HepG2 (cell line): ENCODE measurements at regions of chr1 and their contacts with region 1.

Region 1: DNA sequence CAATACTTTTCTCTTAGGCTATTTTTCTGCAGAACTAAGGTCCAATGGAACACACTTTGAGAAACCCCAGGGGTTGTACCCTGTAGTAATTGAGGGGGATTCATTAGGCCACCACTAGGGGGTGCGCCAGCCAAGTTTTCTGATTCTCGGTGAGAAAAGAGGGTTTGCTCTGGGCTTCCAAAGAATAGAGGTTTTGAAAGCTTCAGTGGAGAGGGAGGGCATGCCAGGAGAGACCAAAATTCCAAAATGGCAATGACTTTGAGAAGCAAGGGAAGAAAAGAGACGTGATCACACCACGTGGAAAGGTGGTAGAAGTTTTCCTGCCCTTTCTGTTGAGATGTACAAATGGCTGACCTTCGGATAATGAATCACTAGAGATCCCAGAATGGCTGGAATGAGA is 323.3 kb downstream of the RPS6KC1 start:
- DNase-seq: peak; percentile 73
- ATAC-seq: peak; percentile 11; the same call in 1 of the 3 replicates
- H3K4me3 ChIP-seq: no peak overlapping the region
- H3K27ac ChIP-seq: peak overlapping the region; percentile 50
- H3K4me1 ChIP-seq: peaks cover 98% of the 10 kb centered on the region
- H3K27me3 ChIP-seq: no peaks in the 10 kb centered on the region
- CTCF ChIP-seq: peak; percentile 82
- EP300 ChIP-seq: no peak
- POLR2A ChIP-seq: no peak
- RAD21 ChIP-seq: peak; percentile 85

Region 2: DNA sequence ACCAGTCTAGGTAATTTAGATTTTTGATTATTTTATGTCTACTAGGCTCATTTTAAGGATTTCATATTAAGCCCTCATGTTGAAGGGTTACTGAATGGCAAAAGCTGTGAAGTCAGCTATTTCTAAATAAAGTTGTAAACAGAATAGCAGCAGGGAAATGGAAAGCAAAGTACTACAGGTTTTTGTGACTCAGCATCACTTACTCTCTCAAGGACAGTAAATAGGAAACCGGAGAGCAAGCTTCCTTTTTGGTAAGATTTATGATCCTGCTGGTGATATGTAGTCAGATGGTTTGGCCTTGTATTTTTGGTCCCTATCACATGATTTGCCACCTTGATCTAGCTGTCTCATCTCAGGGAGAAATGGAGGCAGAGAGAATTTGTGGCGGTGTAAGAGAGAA is 97.3 kb before region 1 on chr1:
- CTCF ChIA-PET with region 1: no interaction called
- POLR2A ChIA-PET with region 1: interaction called, 5 read pairs
- in situ Hi-C with region 1: no loop called
- intact Hi-C with region 1: loop called (anchors 5 kb)
- DNase-seq: peak; percentile 45
- ATAC-seq: peak; percentile 29; the same call in 1 of the 3 replicates
- H3K4me3 ChIP-seq: no peak overlapping the region
- H3K27ac ChIP-seq: peak overlapping the region; percentile 47
- H3K4me1 ChIP-seq: peaks cover 74% of the 10 kb centered on the region
- H3K27me3 ChIP-seq: no peaks in the 10 kb centered on the region
- CTCF ChIP-seq: no peak
- EP300 ChIP-seq: peak in 1 of 2 experiments; percentile 51; a peak in 1 of 4 replicates
- POLR2A ChIP-seq: no peak
- RAD21 ChIP-seq: no peak

Region 3: GRCh38 chr1:213419369-213420030 is 45.1 kb after region 1 on chr1:
- CTCF ChIA-PET with region 1: no interaction called
- POLR2A ChIA-PET with region 1: no interaction called
- in situ Hi-C with region 1: no loop called
- intact Hi-C with region 1: loop called (anchors 2 kb)
- DNase-seq: peak; percentile 49
- ATAC-seq: peak; percentile 82
- H3K4me3 ChIP-seq: no peak overlapping the region
- H3K27ac ChIP-seq: no peak overlapping the region
- H3K4me1 ChIP-seq: peaks cover 42% of the 10 kb centered on the region
- H3K27me3 ChIP-seq: no peaks in the 10 kb centered on the region
- CTCF ChIP-seq: peak; percentile 59
- EP300 ChIP-seq: no peak
- POLR2A ChIP-seq: no peak
- RAD21 ChIP-seq: peak; percentile 64

Region 4: GRCh38 chr1:213530611-213531320 is 156.4 kb after region 1 on chr1:
- CTCF ChIA-PET with region 1: no interaction called
- POLR2A ChIA-PET with region 1: no interaction called
- in situ Hi-C with region 1: no loop called
- intact Hi-C with region 1: no loop called
- DNase-seq: no peak
- ATAC-seq: no peak
- H3K4me3 ChIP-seq: no peak overlapping the region
- H3K27ac ChIP-seq: no peak overlapping the region
- H3K4me1 ChIP-seq: peaks cover 14% of the 10 kb centered on the region
- H3K27me3 ChIP-seq: no peaks in the 10 kb centered on the region
- CTCF ChIP-seq: no peak
- EP300 ChIP-seq: no peak
- POLR2A ChIP-seq: no peak
- RAD21 ChIP-seq: no peak

Region 5: DNA sequence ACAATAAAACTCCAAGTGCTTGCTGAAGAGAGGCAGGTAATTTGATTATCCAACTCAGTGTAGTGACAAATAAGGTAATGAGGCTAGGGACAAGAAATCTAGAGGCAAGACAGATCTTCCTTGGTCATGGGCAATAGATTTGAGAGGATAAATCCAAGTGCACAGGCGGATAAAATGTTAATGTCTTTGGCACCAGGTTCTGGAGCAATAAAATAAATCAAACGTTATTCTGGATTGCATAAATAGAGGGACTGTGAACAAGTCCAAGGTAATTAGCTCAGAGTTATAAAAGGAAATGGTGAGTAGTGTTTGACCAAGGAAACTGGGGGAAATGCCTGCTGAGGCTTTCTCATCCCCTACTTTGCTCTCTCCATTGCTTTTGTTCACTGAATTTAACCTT is 284.1 kb after region 1 on chr1:
- CTCF ChIA-PET with region 1: no interaction called
- POLR2A ChIA-PET with region 1: no interaction called
- in situ Hi-C with region 1: no loop called
- intact Hi-C with region 1: loop called (anchors 10 kb)
- DNase-seq: no peak
- ATAC-seq: no peak
- H3K4me3 ChIP-seq: no peak overlapping the region
- H3K27ac ChIP-seq: no peak overlapping the region
- H3K4me1 ChIP-seq: peaks cover 35% of the 10 kb centered on the region
- H3K27me3 ChIP-seq: no peaks in the 10 kb centered on the region
- CTCF ChIP-seq: no peak
- EP300 ChIP-seq: no peak
- POLR2A ChIP-seq: no peak
- RAD21 ChIP-seq: no peak

Region 6: GRCh38 chr1:213820362-213821149 is 446.2 kb after region 1 on chr1:
- CTCF ChIA-PET with region 1: no interaction called
- POLR2A ChIA-PET with region 1: no interaction called
- in situ Hi-C with region 1: no loop called
- intact Hi-C with region 1: loop called (anchors 10 kb)
- DNase-seq: peak; percentile 52
- ATAC-seq: peak; percentile 70
- H3K4me3 ChIP-seq: peak overlapping the region in 2 of 3 experiments; percentile 8 to 49; a peak in 5 of 6 replicates
- H3K27ac ChIP-seq: peak overlapping the region; percentile 67
- H3K4me1 ChIP-seq: peaks cover 48% of the 10 kb centered on the region
- H3K27me3 ChIP-seq: no peaks in the 10 kb centered on the region
- CTCF ChIP-seq: no peak
- EP300 ChIP-seq: 0 out of 4 replicates have a peak, but pooled peaks of 1 of the 2 experiments have one; percentile 11
- POLR2A ChIP-seq: no peak; a peak in 1 of 4 replicates
- RAD21 ChIP-seq: no peak

Region 7: GRCh38 chr1:214029796-214030195 is 655.4 kb after region 1 on chr1:
- CTCF ChIA-PET with region 1: no interaction called
- POLR2A ChIA-PET with region 1: interaction called, 11 read pairs
- in situ Hi-C with region 1: no loop called
- intact Hi-C with region 1: no loop called
- DNase-seq: no peak
- ATAC-seq: no peak
- H3K4me3 ChIP-seq: no peak overlapping the region
- H3K27ac ChIP-seq: peak overlapping the region; percentile 85
- H3K4me1 ChIP-seq: peaks cover 81% of the 10 kb centered on the region
- H3K27me3 ChIP-seq: no peaks in the 10 kb centered on the region
- CTCF ChIP-seq: no peak
- EP300 ChIP-seq: no peak
- POLR2A ChIP-seq: no peak
- RAD21 ChIP-seq: no peak